Esophagus squamous epithelium (tissue), 5 donors: ENCODE measurements at regions of chr16 and their contacts with region 1.

Region 1: DNA sequence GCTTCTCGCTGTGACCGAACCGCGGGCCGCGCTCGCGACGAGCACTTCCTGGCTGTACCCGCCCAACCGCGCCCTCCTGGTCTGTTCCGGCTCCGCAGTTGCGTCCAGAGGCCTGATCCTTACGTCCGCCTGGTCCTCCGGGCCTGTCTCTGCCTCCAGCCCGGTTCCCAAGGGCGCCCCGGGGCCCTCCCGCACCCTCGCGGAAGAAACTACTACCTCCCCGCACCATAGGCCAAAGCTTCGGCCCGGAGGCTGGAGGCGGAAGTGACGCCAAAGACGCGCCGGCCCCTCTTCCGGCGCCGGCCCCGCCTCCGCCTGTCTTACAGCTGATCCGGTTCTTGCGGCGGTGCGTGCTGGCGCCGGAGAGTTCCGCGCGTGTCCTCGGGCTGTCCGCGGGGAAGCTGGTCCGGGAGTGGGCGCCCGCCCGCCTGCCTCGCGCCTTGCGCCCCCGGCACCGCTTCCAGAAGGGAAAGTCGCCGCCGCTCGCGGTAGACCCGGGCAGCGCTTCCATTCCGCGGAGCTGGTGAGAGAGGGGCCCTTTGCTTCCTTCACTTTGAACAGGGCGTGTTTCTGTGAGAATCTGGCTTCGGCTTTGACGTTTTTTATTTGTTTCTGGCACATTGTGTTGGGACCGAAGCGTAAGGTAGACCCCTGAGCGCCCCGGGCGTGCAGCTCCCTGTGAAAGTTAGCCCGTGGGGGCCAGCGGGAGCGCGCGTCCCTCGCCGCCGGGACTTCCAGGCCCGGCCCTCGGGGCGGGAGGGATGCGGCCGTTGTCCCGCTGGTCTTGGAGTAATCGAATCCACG is at the start of gene ZNF778:
- DNase-seq: peak; percentile 42
- H3K4me3 ChIP-seq: peak within 1 kb of the TSS; percentile 66 to 85 (median 78)
- H3K27ac ChIP-seq: peak within 1 kb of the TSS; percentile 96 to 99 (median 97)
- H3K4me1 ChIP-seq: peaks cover 13 to 38% (median 21%) of the 10 kb centered on the region in 3 donors
- H3K27me3 ChIP-seq: no peaks in the 10 kb centered on the region
- CTCF ChIP-seq: peak in 3 of 6 experiments; percentile 13 to 25 (median 14)
- POLR2A ChIP-seq: peak in 3 of 4 donors; percentile 55 to 84 (median 68)
- total RNA-seq, gene ZNF778: 3.4 to 10.7 (median 6.5) TPM

Region 2: DNA sequence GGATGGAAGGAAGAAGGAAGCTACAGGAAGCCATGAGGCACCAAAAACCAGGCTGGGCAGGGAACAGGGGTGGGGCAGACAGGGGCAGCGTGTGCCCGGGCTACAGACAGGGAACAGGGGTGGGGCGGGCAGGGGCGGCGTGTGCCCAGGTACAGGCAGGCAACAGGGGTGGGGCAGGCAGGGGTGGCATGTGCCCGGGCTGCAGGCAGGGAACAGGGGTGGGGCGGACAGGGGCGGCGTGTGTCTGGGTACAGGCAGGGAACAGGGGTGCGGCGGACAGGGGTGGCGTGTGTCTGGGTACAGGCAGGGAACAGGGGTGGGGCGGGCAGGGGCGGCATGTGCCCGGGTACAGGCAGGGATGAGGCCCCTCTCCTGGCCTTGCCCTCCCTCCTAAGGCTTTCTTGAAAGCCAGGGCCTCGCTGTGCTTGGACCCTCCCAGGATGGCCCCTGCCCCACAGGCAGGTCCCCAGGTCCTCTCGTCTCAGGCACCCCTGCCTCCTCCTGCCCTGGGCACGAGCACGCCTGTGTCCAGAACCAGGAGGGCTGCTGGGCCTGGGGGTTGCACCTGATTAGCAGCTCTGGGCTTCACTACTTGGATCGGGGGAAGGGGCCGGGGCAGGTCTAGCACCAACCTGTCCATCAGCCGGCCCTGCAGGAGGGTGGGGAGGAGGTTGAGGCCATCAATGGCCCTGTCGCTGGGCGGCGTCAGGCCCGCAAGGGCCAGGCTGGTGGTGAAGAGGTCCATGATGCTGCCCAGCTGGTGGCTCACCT is 391.3 kb before region 1 on chr16:
- intact Hi-C with region 1: loop called (anchors 5 kb)
- DNase-seq: no peak
- H3K4me3 ChIP-seq: no peak overlapping the region
- H3K27ac ChIP-seq: peak overlapping the region in 3 of 4 donors; percentile 22 to 54 (median 30)
- H3K4me1 ChIP-seq: peaks cover 0 to 26% (median 9%) of the 10 kb centered on the region in 3 donors
- H3K27me3 ChIP-seq: no peaks in the 10 kb centered on the region
- CTCF ChIP-seq: no peak
- POLR2A ChIP-seq: no peak